Activated CD4-positive, alpha-beta T cell treated with anti-CD3 and anti-CD28 coated beads, Interleukin-2, amount 10 ng/mL, durations not matched to agents 24 days and 14 days (primary cell): ENCODE measurements at regions of chr4 and their contacts with region 1.

Region 1: GRCh38 chr4:170047771-170048354 is 21.7 kb upstream of the MFAP3L start:
- DNase-seq: peak; percentile 83
- H3K4me3 Mint-ChIP-seq: no peak overlapping the region
- H3K27ac Mint-ChIP-seq: no peak overlapping the region
- H3K4me1 Mint-ChIP-seq: no peaks in the 10 kb centered on the region
- H3K27me3 Mint-ChIP-seq: no peaks in the 10 kb centered on the region

Region 2: DNA sequence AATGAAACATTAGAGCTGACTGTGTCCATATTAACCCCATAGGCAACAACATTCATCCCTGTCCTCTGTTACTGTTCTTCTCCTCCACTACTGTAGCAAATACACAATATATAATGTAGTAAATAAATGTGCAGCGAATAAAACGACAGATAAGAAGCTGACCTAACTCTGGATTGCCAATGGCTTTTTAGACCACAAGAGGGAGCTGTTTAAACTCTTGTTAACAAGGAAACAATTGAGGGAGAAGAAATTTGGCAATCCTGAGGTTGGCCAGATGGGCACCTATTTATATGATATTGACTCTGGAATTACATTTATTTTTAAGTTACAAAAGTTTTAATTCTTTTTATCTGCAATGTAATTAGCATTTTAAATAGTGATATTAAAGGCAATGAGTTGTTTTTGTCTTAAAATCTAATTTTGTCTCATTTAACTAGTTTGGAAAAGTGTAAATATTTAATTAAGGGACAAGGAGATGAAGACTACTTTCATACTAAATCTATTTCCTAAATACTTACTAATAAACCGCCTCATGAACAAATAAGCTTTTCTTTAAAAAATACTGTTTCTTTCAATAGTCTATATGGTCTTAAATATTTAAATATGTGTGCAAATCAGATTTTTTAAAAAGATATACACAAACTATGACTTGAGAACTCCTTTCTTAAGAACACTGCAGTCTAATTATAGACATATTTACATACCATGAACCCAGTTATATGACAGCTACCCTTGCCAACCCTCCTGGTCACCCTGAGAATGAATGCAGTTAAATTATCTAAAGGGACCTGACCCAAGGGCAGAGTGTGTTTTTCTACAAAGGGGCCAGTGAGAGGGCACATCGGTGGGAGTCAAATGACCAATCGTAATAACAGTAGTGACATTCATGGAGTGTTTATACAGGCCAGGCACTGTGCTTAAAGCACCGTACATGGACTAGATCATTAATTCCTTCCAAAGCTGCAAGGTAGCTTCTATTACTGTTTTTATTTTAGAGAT is 237.2 kb before region 1 on chr4:
- intact Hi-C with region 1: loop called (anchors 1 kb)
- DNase-seq: peak; percentile 77
- H3K4me3 Mint-ChIP-seq: no peak overlapping the region
- H3K27ac Mint-ChIP-seq: no peak overlapping the region
- H3K4me1 Mint-ChIP-seq: no peaks in the 10 kb centered on the region
- H3K27me3 Mint-ChIP-seq: peaks cover 2% of the 10 kb centered on the region